Activated CD4-positive, alpha-beta T cell treated with anti-CD3 and anti-CD28 coated beads for 36 hours (primary cell): ENCODE measurements at regions of chr22 and their contacts with region 1.

Region 1: DNA sequence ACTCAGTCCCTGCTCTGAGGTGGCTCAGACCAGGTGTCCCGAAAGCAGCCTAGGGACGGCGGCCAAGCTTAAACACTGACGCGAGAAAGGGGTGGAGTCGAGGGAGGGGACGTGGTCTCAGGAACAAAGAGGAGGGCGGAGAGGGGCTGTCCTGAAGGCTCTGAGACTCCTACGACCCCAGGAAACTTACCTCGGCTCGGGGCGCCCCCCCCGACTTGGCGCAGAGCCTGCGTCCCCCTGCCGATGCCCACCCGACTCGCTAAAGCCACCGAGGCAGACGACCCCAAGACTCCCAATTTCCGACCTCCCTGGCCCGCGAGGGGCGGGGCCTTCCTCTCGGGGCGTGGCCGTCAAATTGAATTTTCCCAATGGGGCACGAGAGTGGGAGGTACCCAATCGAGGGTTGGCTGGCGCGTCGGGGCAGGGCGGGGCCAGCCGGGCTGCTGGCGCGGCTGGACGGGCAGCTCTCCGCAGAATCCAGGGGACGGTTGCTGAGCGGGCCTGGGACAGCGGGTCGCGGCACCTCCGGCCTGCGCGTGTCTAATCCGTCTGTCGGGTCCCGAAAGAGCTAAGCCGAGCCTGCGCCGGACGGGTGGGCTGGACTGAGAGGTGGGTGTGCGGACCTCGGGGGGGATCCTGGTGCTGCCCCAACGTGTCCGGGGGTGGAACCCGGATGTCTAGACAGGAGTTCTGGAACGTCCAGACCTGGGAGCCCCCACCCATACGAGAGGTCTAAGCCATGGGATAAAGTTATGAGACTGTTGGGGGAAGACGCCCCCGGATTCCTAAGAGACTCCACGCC is at the start of gene SMTN:
- DNase-seq: peak; percentile 92
- ATAC-seq: peak; percentile 67
- H3K4me3 Mint-ChIP-seq: peak within 1 kb of the TSS; percentile 82
- H3K27ac Mint-ChIP-seq: peak within 1 kb of the TSS; percentile 63
- H3K4me1 Mint-ChIP-seq: peaks cover 30% of the 10 kb centered on the region
- H3K27me3 Mint-ChIP-seq: no peaks in the 10 kb centered on the region
- total RNA-seq, gene SMTN: 40.1 to 45.8 TPM

Region 2: DNA sequence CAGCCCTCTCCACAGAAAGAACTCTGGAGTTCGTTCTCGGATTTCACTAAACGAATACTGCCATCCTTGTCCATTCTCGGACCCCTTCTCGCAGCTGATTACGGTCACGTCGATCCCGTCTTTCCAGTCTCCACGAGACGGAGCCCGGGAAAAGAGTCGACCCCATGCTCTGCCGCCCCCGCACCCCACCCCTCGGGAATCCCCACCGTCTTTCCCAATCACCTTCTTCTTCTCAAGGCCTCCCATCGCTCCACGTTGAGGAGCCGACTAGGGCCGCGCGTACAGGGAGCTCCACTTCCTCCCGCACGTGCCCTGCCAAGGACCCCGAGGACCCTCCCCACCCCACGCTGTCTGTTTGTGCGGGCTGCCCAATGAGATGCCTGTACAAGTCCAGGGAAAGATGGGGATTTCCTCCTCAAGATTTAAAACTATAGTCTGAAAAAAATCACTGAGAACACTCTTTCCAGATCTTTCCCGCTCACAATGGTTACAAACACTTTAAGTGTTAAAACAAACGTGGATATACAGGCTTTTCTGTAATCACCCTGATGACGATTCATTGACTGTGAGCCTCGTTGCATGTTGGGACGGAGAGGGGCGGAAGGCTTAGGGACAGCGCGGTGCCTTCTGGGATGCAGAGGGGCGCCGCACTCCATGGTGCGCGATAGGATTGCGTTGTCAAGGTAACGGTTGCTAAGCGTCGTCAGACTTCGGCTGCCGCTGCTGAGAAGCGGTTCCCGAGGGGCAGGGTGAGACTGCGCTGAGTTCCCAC is 489.3 kb before region 1 on chr22 and contains the start of gene PES1:
- CTCF ChIA-PET with region 1: interaction called, 3 read pairs
- POLR2A ChIA-PET with region 1: no interaction called
- intact Hi-C with region 1: loop called (anchors 1 to 5 kb)
- DNase-seq: peak; percentile 96
- ATAC-seq: peak; percentile 100
- H3K4me3 Mint-ChIP-seq: no peak within 1 kb of the TSS
- H3K27ac Mint-ChIP-seq: no peak within 1 kb of the TSS
- H3K4me1 Mint-ChIP-seq: no peaks in the 10 kb centered on the region
- H3K27me3 Mint-ChIP-seq: peaks cover 4% of the 10 kb centered on the region
- total RNA-seq, gene PES1: 134 to 137 TPM

Region 3: GRCh38 chr22:30920407-30920806 is 160.6 kb before region 1 on chr22:
- CTCF ChIA-PET with region 1: interaction called, 3 read pairs
- POLR2A ChIA-PET with region 1: no interaction called
- intact Hi-C with region 1: loop called in 1 of 2 experiments (anchors 1 kb)
- DNase-seq: peak; percentile 91
- ATAC-seq: peak; percentile 83
- H3K4me3 Mint-ChIP-seq: peak overlapping the region; percentile 45
- H3K27ac Mint-ChIP-seq: no peak overlapping the region
- H3K4me1 Mint-ChIP-seq: peaks cover 9% of the 10 kb centered on the region
- H3K27me3 Mint-ChIP-seq: no peaks in the 10 kb centered on the region

Region 4: DNA sequence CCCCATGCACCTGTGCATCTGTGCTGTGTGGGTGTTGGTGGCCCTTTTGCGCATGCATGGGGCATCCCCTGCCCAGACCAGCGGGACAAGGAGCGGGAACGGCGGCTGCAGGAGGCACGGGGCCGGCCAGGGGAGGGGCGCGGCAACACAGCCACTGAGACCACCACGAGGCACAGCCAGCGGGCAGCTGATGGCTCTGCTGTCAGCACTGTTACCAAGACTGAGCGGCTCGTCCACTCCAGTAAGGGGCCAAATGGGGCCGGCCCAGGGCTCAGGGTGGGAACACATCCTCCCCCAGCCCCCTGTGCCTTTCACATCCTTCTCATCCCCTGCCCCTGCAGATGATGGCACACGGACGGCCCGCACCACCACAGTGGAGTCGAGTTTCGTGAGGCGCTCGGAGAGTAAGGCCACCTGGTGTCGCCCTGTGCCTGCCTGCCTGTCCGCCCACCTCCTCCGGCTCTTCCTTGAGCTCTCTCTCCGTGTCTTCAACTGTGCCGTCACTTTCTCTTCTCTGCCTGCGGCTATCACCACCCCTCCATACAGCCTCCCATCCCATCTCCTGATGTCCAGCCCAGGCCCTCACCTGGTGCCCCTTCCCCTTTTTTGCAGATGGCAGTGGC is 15.7 kb after region 1 on chr22:
- CTCF ChIA-PET with region 1: interaction called, 13 read pairs
- POLR2A ChIA-PET with region 1: no interaction called
- intact Hi-C with region 1: no loop called
- DNase-seq: no peak
- ATAC-seq: no peak
- H3K4me3 Mint-ChIP-seq: no peak overlapping the region
- H3K27ac Mint-ChIP-seq: no peak overlapping the region
- H3K4me1 Mint-ChIP-seq: no peaks in the 10 kb centered on the region
- H3K27me3 Mint-ChIP-seq: no peaks in the 10 kb centered on the region

Region 5: GRCh38 chr22:31211862-31212730 is 131.0 kb after region 1 on chr22 and contains the start of gene LIMK2:
- CTCF ChIA-PET with region 1: interaction called, 4 read pairs
- POLR2A ChIA-PET with region 1: no interaction called
- intact Hi-C with region 1: loop called in 1 of 2 experiments (anchors 2 kb)
- DNase-seq: peak; percentile 99
- ATAC-seq: peak; percentile 97
- H3K4me3 Mint-ChIP-seq: peak within 1 kb of the TSS; percentile 85
- H3K27ac Mint-ChIP-seq: peak within 1 kb of the TSS; percentile 92
- H3K4me1 Mint-ChIP-seq: peaks cover 45% of the 10 kb centered on the region
- H3K27me3 Mint-ChIP-seq: no peaks in the 10 kb centered on the region
- total RNA-seq, gene LIMK2: 31.8 to 34.4 TPM

Region 6: GRCh38 chr22:31630331-31631329 is 549.6 kb after region 1 on chr22:
- CTCF ChIA-PET with region 1: no interaction called
- POLR2A ChIA-PET with region 1: no interaction called
- intact Hi-C with region 1: loop called in 1 of 2 experiments (anchors 10 kb)
- DNase-seq: peak; percentile 93
- ATAC-seq: peak; percentile 82
- H3K4me3 Mint-ChIP-seq: peak overlapping the region; percentile 81
- H3K27ac Mint-ChIP-seq: peak overlapping the region; percentile 89
- H3K4me1 Mint-ChIP-seq: peaks cover 60% of the 10 kb centered on the region
- H3K27me3 Mint-ChIP-seq: no peaks in the 10 kb centered on the region

Region 7: DNA sequence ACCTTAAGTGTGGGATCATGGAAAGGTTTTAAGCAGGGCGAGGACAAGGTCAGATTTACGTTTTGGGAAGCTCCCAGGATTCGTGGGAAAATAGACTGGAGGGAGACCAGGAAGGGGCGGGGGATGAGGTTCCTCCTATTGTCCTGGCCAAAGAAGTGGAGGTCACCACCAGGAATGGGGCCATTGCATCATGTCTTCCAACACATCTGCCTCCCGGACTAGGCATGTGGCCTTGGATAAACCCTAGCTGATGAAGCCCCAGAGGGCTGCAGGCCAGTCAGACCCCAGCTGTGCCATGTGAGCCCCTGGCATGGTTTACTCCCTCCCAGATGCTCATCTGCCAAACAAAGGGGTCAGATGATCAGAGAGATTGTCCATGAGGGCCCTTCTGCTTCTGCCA is 851.8 kb after region 1 on chr22:
- CTCF ChIA-PET with region 1: no interaction called
- POLR2A ChIA-PET with region 1: no interaction called
- intact Hi-C with region 1: no loop called
- DNase-seq: no peak
- ATAC-seq: no peak
- H3K4me3 Mint-ChIP-seq: no peak overlapping the region
- H3K27ac Mint-ChIP-seq: no peak overlapping the region
- H3K4me1 Mint-ChIP-seq: no peaks in the 10 kb centered on the region
- H3K27me3 Mint-ChIP-seq: peaks cover 5% of the 10 kb centered on the region